Activated naive CD4-positive, alpha-beta T cell treated with anti-CD3 and anti-CD28 coated beads, Interleukin-2, amount 10 ng/mL, durations not matched to agents 7 days and 5 days (primary cell): ENCODE measurements at regions of chr6 and their contacts with region 1.

Region 1: GRCh38 chr6:56708810-56709597 is 66.3 kb upstream of the DST start:
- DNase-seq: no peak
- H3K4me3 Mint-ChIP-seq: no peak overlapping the region
- H3K27ac Mint-ChIP-seq: no peak overlapping the region
- H3K4me1 Mint-ChIP-seq: no peaks in the 10 kb centered on the region
- H3K27me3 Mint-ChIP-seq: peaks cover 3% of the 10 kb centered on the region

Region 2: GRCh38 chr6:56690519-56691285 is 18.3 kb before region 1 on chr6:
- CTCF ChIA-PET with region 1: no interaction called
- DNase-seq: no peak
- H3K4me3 Mint-ChIP-seq: no peak overlapping the region
- H3K27ac Mint-ChIP-seq: no peak overlapping the region
- H3K4me1 Mint-ChIP-seq: no peaks in the 10 kb centered on the region
- H3K27me3 Mint-ChIP-seq: peaks cover 7% of the 10 kb centered on the region

Region 3: DNA sequence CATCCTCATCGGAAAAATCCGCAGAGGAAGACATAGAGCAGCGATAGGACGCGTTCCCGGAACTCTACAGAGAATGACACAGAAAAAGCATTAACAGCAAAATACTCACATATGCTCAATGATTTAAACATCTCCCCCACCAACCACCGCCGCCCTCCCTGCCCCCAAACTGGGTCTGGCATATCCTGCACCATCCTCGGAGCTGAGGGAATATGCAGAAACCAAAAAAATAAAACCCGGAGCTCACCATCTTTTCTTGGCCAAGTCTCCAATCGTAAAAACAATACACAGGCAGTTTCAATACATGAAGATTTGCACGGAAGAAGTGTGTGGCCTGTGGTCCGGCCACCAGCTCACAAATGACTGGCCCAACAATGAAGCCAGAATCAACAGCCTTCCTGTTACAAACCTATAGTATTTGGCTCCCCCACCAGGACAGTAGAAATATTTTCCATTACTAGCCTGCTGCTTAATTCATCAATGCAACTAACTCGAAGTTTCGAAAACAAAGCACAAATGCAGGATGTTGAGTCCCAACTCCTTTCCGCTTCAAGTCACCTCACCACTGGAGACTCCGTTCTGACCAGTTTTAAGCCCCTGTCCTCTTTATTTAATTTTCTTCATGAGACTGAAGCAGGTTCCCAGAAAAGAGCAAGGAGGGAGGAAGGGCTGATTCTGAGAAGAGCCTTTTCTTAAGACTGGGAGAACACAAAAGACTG is 142.7 kb after region 1 on chr6:
- CTCF ChIA-PET with region 1: interaction called, 23 read pairs
- DNase-seq: peak; percentile 46
- H3K4me3 Mint-ChIP-seq: peak overlapping the region; percentile 62
- H3K27ac Mint-ChIP-seq: peak overlapping the region; percentile 39
- H3K4me1 Mint-ChIP-seq: peaks cover 29% of the 10 kb centered on the region
- H3K27me3 Mint-ChIP-seq: peaks cover 24% of the 10 kb centered on the region